ENCODE measurements at regions of chr19 and their contacts with region 1.

Region 1: GRCh38 chr19:7705387-7706187 is 3.7 kb upstream of the FCER2 start:
- DNase-seq: peak; percentile 78
- ATAC-seq: peak; percentile 38
- H3K4me3 Mint-ChIP-seq: peak overlapping the region; percentile 78
- H3K27ac Mint-ChIP-seq: peak overlapping the region; percentile 97
- H3K4me1 Mint-ChIP-seq: peaks cover 96% of the 10 kb centered on the region
- H3K27me3 Mint-ChIP-seq: no peaks in the 10 kb centered on the region
- CTCF ChIP-seq: no peak

Region 2: DNA sequence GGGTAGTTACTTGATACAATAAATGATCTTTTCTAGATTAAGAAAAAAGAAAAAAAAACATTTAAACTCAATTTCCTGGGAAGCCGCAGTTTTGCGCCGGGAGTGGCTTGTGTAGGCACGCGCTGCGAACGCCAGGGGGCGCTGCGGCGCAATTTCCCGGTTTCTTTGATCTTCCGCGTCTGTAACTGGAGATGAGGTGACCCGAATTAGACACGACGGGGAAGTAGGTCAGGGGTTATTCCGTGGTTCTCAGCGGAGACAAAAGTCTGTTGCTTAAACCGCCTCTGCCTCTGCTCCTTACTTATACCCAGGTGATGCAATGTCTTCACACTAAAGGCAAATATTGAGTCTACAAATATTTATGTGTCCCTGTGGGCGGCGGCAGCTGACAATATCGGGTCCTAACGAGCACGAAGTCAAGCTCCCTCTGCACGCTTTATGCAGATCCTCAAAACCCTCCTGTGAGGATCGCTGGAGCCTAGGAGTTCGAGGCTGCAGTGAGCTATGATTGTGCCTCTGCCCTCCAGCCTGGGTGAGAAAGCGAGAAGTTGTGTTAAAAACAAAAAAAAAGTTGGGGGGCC is 53.4 kb before region 1 on chr19:
- CTCF ChIA-PET with region 1: no interaction called
- POLR2A ChIA-PET with region 1: no interaction called
- intact Hi-C with region 1: no loop called
- DNase-seq: peak; percentile 82
- ATAC-seq: peak; percentile 87
- H3K4me3 Mint-ChIP-seq: peak overlapping the region; percentile 78
- H3K27ac Mint-ChIP-seq: peak overlapping the region; percentile 41
- H3K4me1 Mint-ChIP-seq: peaks cover 8% of the 10 kb centered on the region
- H3K27me3 Mint-ChIP-seq: no peaks in the 10 kb centered on the region
- CTCF ChIP-seq: peak; percentile 81

Region 3: GRCh38 chr19:7685541-7686416 is 19.8 kb before region 1 on chr19:
- CTCF ChIA-PET with region 1: interaction called, 48 read pairs
- POLR2A ChIA-PET with region 1: interaction called, 42 read pairs
- intact Hi-C with region 1: loop called (anchors 1 kb)
- DNase-seq: no peak
- ATAC-seq: no peak
- H3K4me3 Mint-ChIP-seq: no peak overlapping the region
- H3K27ac Mint-ChIP-seq: peak overlapping the region; percentile 72
- H3K4me1 Mint-ChIP-seq: peaks cover 32% of the 10 kb centered on the region
- H3K27me3 Mint-ChIP-seq: no peaks in the 10 kb centered on the region
- CTCF ChIP-seq: no peak

Region 4: DNA sequence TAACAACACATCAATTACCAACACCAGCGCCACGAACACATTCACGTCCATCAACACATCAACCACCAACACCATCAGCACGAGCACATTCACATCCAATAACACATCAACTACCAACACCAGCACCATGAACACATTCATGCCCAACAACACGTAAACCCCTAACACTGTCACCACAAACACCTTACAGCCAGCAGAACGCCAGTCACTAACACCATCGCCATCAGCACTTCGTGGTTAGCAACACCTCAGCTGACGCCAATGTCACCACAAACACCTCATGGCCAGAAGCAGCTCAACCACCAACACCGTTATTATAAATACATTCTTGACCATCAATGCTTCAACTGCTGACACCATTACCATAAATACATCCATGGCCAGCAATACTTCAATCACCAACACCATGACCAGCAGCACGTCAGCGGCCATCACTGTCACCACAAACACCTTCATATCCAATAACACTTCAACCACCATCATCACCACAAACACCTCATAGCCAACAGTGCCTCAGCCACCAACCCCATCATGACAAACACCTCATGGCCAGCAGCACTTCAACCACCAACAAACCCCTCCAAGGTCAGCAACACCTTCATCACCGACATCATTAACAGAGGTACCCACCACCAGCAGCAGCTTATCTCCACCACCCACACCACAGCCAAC is 13.0 kb before region 1 on chr19:
- CTCF ChIA-PET with region 1: interaction called, 3 read pairs
- POLR2A ChIA-PET with region 1: interaction called, 25 read pairs
- intact Hi-C with region 1: loop called (anchors 1 kb)
- DNase-seq: no peak
- ATAC-seq: no peak
- H3K4me3 Mint-ChIP-seq: no peak overlapping the region
- H3K27ac Mint-ChIP-seq: no peak overlapping the region
- H3K4me1 Mint-ChIP-seq: peaks cover 40% of the 10 kb centered on the region
- H3K27me3 Mint-ChIP-seq: no peaks in the 10 kb centered on the region
- CTCF ChIP-seq: no peak

Region 5: DNA sequence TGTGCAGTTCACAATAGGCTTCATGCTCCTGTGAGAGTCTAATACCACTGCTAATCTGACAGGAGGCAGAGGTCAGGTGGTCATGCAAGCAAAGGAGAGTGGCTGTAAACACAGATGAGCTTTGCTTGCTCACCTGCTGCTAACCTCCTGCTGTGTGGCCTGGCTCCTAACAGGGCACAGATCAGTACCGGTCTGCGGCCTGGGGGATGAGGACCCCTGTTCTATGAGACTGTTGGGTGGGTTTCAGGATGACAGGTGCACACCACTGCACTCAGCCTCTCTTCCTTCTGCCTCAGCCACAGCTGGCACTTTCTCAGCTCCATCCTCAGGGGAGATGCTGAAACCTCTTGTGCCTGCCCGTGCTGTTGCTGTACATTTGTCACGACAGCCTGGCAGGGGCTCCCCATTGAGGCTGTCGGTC is 16.7 kb after region 1 on chr19:
- CTCF ChIA-PET with region 1: interaction called, 3 read pairs
- POLR2A ChIA-PET with region 1: interaction called, 10 read pairs
- intact Hi-C with region 1: loop called (anchors 2 kb)
- DNase-seq: no peak
- ATAC-seq: peak; percentile 67
- H3K4me3 Mint-ChIP-seq: no peak overlapping the region
- H3K27ac Mint-ChIP-seq: peak overlapping the region; percentile 30
- H3K4me1 Mint-ChIP-seq: peaks cover 35% of the 10 kb centered on the region
- H3K27me3 Mint-ChIP-seq: peaks cover under 1% of the 10 kb centered on the region
- CTCF ChIP-seq: no peak

Region 6: DNA sequence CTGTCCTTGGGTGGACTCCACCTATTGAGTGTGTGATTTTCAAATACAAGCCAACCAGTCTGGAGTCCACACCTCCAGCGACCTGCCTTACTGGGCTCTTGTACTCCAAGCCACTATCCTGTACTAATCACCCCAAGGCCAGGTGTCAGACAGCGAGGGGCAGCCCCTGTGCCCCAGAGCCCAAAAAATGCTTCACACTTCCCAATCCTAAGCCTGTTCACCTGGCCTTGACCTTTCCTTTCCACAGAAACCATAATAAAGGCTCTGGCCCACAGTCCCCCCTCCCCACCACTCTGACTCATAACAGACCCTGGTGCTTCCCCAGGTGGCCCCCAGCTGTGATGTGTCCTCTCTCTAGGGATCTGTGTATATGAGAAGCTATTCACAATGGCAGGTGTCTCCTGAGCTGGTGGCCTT is 37.8 kb after region 1 on chr19:
- CTCF ChIA-PET with region 1: interaction called, 6 read pairs
- POLR2A ChIA-PET with region 1: interaction called, 41 read pairs
- intact Hi-C with region 1: loop called (anchors 1 kb)
- DNase-seq: peak; percentile 64
- ATAC-seq: peak; percentile 94
- H3K4me3 Mint-ChIP-seq: peak overlapping the region; percentile 45
- H3K27ac Mint-ChIP-seq: peak overlapping the region; percentile 77
- H3K4me1 Mint-ChIP-seq: peaks cover 57% of the 10 kb centered on the region
- H3K27me3 Mint-ChIP-seq: peaks cover 8% of the 10 kb centered on the region
- CTCF ChIP-seq: no peak

Region 7: GRCh38 chr19:7751157-7751783 is 45.7 kb after region 1 on chr19:
- CTCF ChIA-PET with region 1: interaction called, 4 read pairs
- POLR2A ChIA-PET with region 1: interaction called, 16 read pairs
- intact Hi-C with region 1: loop called (anchors 1 kb)
- DNase-seq: peak; percentile 47
- ATAC-seq: peak; percentile 94
- H3K4me3 Mint-ChIP-seq: peak overlapping the region; percentile 52
- H3K27ac Mint-ChIP-seq: peak overlapping the region; percentile 73
- H3K4me1 Mint-ChIP-seq: peaks cover 54% of the 10 kb centered on the region
- H3K27me3 Mint-ChIP-seq: no peaks in the 10 kb centered on the region
- CTCF ChIP-seq: no peak

Region 8: GRCh38 chr19:7903244-7904073 is 197.9 kb after region 1 on chr19 and contains the start of gene MAP2K7:
- CTCF ChIA-PET with region 1: no interaction called
- POLR2A ChIA-PET with region 1: no interaction called
- intact Hi-C with region 1: loop called (anchors 1 kb)
- DNase-seq: peak; percentile 99
- ATAC-seq: peak; percentile 91
- H3K4me3 Mint-ChIP-seq: peak within 1 kb of the TSS; percentile 89
- H3K27ac Mint-ChIP-seq: peak within 1 kb of the TSS; percentile 91
- H3K4me1 Mint-ChIP-seq: peaks cover 33% of the 10 kb centered on the region
- H3K27me3 Mint-ChIP-seq: no peaks in the 10 kb centered on the region
- CTCF ChIP-seq: no peak
- total RNA-seq, gene MAP2K7: 46.3 and 52.8 TPM in 2 replicates

Region 9: GRCh38 chr19:7953060-7953459 is 247.5 kb after region 1 on chr19:
- CTCF ChIA-PET with region 1: no interaction called
- POLR2A ChIA-PET with region 1: no interaction called
- intact Hi-C with region 1: no loop called
- DNase-seq: no peak
- ATAC-seq: no peak
- H3K4me3 Mint-ChIP-seq: no peak overlapping the region
- H3K27ac Mint-ChIP-seq: no peak overlapping the region
- H3K4me1 Mint-ChIP-seq: no peaks in the 10 kb centered on the region
- H3K27me3 Mint-ChIP-seq: no peaks in the 10 kb centered on the region
- CTCF ChIP-seq: no peak